Mammary epithelial cell (primary cell): ENCODE measurements at regions of chr14 and their contacts with region 1.

Region 1: GRCh38 chr14:105045710-105046326 is 19.4 kb downstream of the GPR132 start:
- DNase-seq: peak; percentile 59
- H3K4me3 ChIP-seq: no peak overlapping the region
- H3K27ac ChIP-seq: no peak overlapping the region
- H3K4me1 ChIP-seq: peaks cover 8% of the 10 kb centered on the region
- H3K27me3 ChIP-seq: no peaks in the 10 kb centered on the region
- CTCF ChIP-seq: peak; percentile 92 to 97

Region 2: DNA sequence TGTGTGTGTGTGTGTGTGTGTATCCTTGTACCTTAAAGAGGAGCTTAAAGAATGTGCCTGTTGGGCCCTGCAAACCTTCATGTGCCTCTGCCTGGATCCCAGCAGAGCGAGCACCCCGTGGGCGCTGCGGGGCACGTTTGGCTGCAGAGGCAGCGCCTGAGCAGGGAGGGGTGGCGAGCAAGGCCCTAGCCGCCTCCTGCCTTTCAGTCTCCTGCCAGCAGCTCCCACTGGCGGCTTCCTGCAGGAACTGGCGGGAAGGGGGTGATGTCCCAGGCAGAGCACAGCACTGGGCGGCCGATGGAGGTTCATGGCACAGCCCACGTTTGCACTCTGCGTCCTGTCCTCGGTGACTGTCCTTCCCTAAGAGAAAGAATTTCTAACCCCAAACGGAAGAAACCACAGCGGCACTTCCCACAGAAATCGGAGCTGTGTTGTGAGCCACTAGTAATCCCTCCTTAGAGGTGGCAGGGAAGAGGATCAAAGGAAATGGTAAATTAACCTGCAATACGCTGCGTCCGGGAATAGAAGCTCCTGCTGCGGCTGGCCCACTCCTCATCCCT is 225.1 kb before region 1 on chr14:
- CTCF ChIA-PET with region 1: no interaction called
- dilution Hi-C with region 1: loop called (anchors 5 kb)
- in situ Hi-C with region 1: no loop called
- intact Hi-C with region 1: no loop called
- DNase-seq: peak; percentile 62
- H3K4me3 ChIP-seq: no peak overlapping the region
- H3K27ac ChIP-seq: no peak overlapping the region
- H3K4me1 ChIP-seq: peaks cover 14% of the 10 kb centered on the region
- H3K27me3 ChIP-seq: no peaks in the 10 kb centered on the region
- CTCF ChIP-seq: peak; percentile 40 to 64

Region 3: DNA sequence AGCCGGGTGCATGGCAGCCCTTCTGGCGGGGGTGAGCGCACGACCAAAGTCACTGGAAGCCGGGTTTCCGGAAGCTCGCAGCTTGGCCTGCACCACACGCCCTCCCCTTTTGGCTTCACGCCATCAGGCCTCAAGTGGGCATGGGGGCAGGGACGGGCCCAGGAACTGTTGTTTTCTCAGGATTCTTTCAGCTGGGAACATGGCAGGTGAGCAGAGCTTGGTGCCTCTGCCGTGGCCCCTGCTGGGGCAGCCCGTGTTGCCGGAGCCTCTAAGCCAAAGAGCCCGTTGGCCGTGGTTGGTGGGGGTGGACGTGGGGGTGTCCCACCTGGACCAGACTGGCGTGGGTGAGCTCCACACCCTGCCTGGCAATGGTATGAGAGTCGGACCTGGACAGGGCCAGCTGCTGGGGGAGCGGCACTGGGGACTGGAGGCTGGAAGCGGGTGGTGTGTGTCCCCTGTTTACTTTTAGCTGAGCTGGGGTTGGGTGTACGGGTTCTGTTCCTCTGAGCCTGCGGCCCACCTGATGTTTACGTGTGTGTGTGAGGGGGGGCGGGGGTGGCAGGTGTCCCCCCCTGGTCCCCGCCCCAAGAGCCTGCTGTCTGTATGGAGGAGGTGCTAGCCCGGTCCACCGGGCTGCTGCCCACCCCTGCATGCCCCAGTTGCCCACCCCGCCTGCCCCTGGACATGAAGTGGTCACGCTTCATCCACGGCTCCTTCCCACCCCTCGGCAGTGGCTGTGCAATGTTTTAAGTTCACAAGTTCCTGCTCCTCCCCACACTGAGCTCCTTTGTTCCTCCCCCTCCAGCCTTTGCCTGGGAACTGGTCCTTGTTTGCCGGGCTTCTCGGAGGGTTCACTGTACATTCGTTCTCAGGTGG is 149.8 kb before region 1 on chr14:
- CTCF ChIA-PET with region 1: no interaction called
- dilution Hi-C with region 1: no loop called
- in situ Hi-C with region 1: loop called in 1 of 2 experiments (anchors 10 kb)
- intact Hi-C with region 1: loop called (anchors 1 kb)
- DNase-seq: no peak
- H3K4me3 ChIP-seq: no peak overlapping the region
- H3K27ac ChIP-seq: no peak overlapping the region
- H3K4me1 ChIP-seq: peaks cover 11% of the 10 kb centered on the region
- H3K27me3 ChIP-seq: no peaks in the 10 kb centered on the region
- CTCF ChIP-seq: no peak

Region 4: DNA sequence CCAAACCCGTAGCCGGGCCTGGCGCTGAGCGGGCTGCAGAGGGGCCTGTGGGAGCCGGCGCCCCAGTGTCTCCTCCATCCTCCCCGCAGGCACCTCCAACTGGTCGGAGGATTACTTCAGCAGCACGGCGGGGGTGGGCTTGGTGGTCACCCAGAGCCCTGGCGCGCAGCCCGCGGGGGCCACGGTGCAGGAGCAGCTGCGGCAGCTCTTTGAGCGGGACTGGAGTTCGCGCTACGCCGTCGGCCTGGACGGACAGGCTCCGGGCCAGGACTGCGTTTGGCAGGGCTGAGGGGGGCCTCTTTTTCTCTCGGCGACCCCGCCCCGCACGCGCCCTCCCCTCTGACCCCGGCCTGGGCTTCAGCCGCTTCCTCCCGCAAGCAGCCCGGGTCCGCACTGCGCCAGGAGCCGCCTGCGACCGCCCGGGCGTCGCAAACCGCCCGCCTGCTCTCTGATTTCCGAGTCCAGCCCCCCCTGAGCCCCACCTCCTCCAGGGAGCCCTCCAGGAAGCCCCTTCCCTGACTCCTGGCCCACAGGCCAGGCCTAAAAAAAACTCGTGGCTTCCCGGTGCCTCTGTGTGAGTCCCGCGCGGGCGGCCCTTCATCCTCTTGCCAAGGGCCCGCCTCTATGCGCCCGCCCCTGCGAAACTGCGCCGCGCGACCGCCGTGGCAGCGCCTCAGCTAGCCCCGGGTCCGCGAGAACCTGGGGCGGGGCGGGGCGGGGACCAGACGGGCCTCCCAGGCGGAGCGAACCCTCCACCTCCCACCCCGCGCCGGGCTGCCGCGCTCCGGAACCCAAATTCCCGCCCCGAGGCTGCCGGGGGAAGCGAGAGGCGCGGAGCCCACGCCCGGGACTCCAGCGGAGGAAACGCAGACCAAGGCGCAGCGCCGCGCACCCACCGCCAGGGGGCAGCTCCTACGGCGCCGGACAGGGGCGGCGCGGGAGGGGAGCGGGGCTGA is 112.9 kb before region 1 on chr14:
- CTCF ChIA-PET with region 1: no interaction called
- dilution Hi-C with region 1: no loop called
- in situ Hi-C with region 1: no loop called
- intact Hi-C with region 1: loop called (anchors 1 kb)
- DNase-seq: peak; percentile 68
- H3K4me3 ChIP-seq: peak overlapping the region; percentile 23 to 48 (median 40)
- H3K27ac ChIP-seq: no peak overlapping the region
- H3K4me1 ChIP-seq: peaks cover 6% of the 10 kb centered on the region
- H3K27me3 ChIP-seq: no peaks in the 10 kb centered on the region
- CTCF ChIP-seq: peak; percentile 46 to 72

Region 5: GRCh38 chr14:105012171-105012985 is 33.4 kb before region 1 on chr14:
- CTCF ChIA-PET with region 1: no interaction called
- dilution Hi-C with region 1: no loop called
- in situ Hi-C with region 1: no loop called
- intact Hi-C with region 1: loop called (anchors 1 kb)
- DNase-seq: no peak
- H3K4me3 ChIP-seq: no peak overlapping the region
- H3K27ac ChIP-seq: no peak overlapping the region
- H3K4me1 ChIP-seq: peaks cover 36% of the 10 kb centered on the region
- H3K27me3 ChIP-seq: no peaks in the 10 kb centered on the region
- CTCF ChIP-seq: peak; percentile 41 to 70

Region 6: DNA sequence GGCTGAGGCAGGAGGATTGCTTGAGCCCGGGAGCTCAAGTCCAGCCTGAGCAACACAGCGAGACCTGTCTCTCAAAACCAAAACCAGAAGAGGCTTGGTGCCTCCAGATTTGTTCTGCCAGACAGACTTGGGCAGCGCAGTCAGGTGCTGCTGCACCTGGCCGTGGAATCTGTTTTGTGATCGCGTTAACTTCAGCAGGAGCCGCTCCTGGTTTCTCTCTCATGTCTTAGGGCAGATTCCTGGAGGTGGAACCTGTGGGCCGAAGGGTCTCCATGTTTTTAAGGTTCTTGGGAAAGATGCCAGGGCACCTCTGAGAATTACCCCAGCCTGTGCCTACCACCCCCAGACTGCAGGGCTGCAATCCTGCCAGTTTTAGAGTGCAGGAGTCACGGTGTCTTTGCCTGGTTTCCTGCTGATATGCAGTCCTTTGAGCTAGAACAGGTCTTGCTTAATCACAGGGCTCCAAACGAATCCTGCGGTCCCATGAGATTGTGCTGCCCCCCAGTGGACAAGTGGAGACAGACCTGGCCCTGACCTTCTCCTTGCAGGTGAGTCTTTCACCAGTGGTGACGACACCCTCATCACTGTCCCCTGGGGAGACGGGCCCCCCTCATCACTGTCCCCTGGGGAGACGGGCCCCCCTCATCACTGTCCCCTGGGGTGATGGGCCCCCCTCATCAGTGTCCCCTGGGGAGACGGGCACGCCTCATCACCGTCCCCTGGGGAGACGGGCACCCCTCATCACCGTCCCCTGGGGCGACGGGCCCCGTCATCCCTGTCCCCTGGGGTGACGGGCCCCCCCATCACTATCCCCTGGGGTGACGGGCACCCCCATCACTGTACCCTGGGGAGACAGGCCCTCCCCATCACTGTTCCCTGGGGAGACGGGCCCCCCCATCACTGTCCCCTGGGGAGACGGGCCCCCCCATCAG is 306.4 kb after region 1 on chr14:
- CTCF ChIA-PET with region 1: no interaction called
- dilution Hi-C with region 1: no loop called
- in situ Hi-C with region 1: no loop called
- intact Hi-C with region 1: loop called (anchors 1 kb)
- DNase-seq: peak; percentile 82
- H3K4me3 ChIP-seq: no peak overlapping the region
- H3K27ac ChIP-seq: no peak overlapping the region
- H3K4me1 ChIP-seq: no peaks in the 10 kb centered on the region
- H3K27me3 ChIP-seq: no peaks in the 10 kb centered on the region
- CTCF ChIP-seq: peak; percentile 85 to 90